Ovary (tissue), 10 donors: ENCODE measurements at regions of chr11 and their contacts with region 1.

Region 1: DNA sequence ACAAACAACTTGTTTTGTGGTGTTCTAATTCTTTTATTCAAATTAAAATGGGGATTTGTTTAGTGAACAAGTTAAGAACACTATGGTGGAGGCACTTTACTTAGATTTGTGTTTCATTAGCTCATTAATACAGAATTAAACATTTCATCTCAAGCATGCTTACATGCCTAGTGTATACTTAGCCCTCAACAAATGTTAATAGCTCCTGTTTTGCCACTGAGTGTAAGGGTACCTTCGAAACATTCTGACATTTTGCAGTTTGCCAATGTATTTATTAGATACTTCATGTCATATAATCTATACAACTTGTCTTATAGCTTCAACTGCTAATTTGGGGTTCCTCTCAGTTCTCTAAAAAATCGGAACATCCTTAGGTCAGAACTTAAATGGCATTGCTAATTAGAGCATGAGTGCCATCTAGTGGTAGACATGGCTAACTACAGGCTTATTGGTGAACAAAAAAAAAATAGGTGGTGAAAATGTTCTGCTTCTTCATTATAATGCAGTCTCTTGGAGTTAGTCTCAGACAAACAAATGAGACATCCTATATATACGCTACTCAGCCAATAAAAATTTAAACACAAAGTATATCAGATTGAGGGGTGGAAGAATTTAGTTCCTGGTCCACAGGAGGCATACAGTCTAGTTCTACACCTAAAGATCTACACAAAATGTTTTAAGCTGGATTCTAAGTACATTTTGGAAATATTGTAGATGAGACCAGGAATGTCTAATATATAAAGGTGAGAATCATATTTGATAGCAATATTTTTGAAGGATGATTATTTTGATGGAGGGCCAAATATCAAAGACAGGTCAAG is 4.9 kb upstream of the CNTN5 start:
- DNase-seq: no peak
- H3K4me3 ChIP-seq: no peak overlapping the region
- H3K27ac ChIP-seq: no peak overlapping the region
- H3K4me1 ChIP-seq: no peaks in the 10 kb centered on the region
- H3K27me3 ChIP-seq: no peaks in the 10 kb centered on the region
- CTCF ChIP-seq: peak; percentile 23 to 36 (median 32)
- EP300 ChIP-seq: no peak
- POLR2A ChIP-seq: no peak

Region 2: GRCh38 chr11:98955551-98955950 is 60.3 kb before region 1 on chr11:
- intact Hi-C with region 1: no loop called
- DNase-seq: no peak
- H3K4me3 ChIP-seq: no peak overlapping the region
- H3K27ac ChIP-seq: no peak overlapping the region
- H3K4me1 ChIP-seq: no peaks in the 10 kb centered on the region
- H3K27me3 ChIP-seq: no peaks in the 10 kb centered on the region
- CTCF ChIP-seq: no peak
- EP300 ChIP-seq: no peak
- POLR2A ChIP-seq: no peak

Region 3: GRCh38 chr11:98979210-98979609 is 36.6 kb before region 1 on chr11:
- intact Hi-C with region 1: loop called in 1 of 4 experiments (anchors 2 kb)
- DNase-seq: no peak
- H3K4me3 ChIP-seq: no peak overlapping the region
- H3K27ac ChIP-seq: no peak overlapping the region
- H3K4me1 ChIP-seq: no peaks in the 10 kb centered on the region
- H3K27me3 ChIP-seq: no peaks in the 10 kb centered on the region
- CTCF ChIP-seq: no peak
- EP300 ChIP-seq: no peak
- POLR2A ChIP-seq: no peak